ENCODE measurements at regions of chr2 and their contacts with region 1.

Region 1: DNA sequence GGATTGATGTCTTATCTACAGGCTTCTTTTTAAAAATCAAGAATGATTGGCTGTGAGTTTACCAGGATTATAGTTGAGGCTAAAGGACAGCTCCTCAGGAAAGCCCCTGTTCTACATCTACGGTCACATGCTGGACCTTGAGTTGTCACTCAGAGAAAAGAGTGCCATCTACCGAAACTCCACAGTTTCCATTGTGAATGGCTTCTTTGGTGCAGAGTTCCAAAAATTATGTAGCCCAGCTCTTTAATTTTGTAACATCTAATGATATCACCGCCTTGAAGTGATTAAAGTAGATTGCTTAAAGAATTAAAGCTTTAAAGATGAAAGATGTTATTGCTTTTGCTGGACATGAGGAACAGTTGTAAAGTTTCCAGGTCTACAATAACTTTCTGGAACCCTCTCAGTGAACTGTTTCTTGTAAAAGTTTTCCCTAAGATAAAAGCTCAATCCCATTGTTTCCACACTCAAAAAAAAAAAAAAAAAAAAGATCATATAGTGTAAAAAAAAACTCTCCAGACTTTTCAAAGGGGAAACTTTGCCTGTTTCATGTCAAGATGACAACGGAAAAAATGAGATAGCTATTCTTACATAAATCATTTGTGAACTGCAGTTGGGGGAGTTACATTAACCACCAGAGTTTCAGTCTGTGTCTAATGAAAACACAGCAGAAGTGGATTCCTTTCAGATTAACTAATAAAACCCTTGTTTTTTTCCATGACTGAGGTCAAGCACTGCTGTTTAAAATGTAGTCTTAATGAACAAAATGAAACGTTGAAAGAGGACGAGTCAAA is 4.3 kb downstream of the COL3A1 start:
- DNase-seq: peak; percentile 86
- H3K4me3 ChIP-seq: peak overlapping the region in 1 of 3 experiments; percentile 13
- H3K27ac ChIP-seq: peak overlapping the region; percentile 12
- H3K4me1 ChIP-seq: peaks cover 23% of the 10 kb centered on the region
- H3K27me3 ChIP-seq: no peaks in the 10 kb centered on the region
- CTCF ChIP-seq: peak; percentile 16 to 25
- POLR2A ChIP-seq: no peak

Region 2: GRCh38 chr2:188524519-188525113 is 453.9 kb before region 1 on chr2:
- CTCF ChIA-PET with region 1: interaction called, 250 read pairs
- POLR2A ChIA-PET with region 1: no interaction called
- dilution Hi-C with region 1: no loop called
- intact Hi-C with region 1: loop called (anchors 1 kb)
- DNase-seq: peak; percentile 65
- H3K4me3 ChIP-seq: no peak overlapping the region
- H3K27ac ChIP-seq: no peak overlapping the region
- H3K4me1 ChIP-seq: peaks cover 22% of the 10 kb centered on the region
- H3K27me3 ChIP-seq: no peaks in the 10 kb centered on the region
- CTCF ChIP-seq: peak; percentile 49 to 59
- POLR2A ChIP-seq: no peak

Region 3: GRCh38 chr2:188534875-188535274 is 443.6 kb before region 1 on chr2:
- CTCF ChIA-PET with region 1: interaction called, 3 read pairs
- POLR2A ChIA-PET with region 1: no interaction called
- dilution Hi-C with region 1: no loop called
- intact Hi-C with region 1: loop called (anchors 5 kb)
- DNase-seq: no peak
- H3K4me3 ChIP-seq: no peak overlapping the region
- H3K27ac ChIP-seq: no peak overlapping the region
- H3K4me1 ChIP-seq: no peaks in the 10 kb centered on the region
- H3K27me3 ChIP-seq: no peaks in the 10 kb centered on the region
- CTCF ChIP-seq: no peak
- POLR2A ChIP-seq: no peak

Region 4: DNA sequence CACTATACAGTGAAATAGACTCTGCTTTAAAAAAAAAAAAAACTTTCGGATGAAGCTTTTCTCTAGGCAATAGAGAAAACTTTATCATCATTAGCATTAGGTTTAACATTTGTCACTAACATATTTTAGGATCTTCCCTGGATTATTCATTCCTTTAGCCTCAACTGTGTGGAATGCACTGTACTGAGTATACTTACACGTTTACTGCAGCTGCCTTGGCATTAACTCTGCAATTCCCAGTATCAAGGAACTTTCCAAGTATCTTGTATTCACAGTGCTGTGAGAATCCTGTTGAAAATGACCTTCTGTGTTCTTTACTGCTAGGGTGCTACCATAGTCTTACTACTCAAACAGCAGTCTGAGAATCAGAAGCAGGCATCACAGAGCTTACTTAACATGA is 332.5 kb before region 1 on chr2:
- CTCF ChIA-PET with region 1: no interaction called
- POLR2A ChIA-PET with region 1: no interaction called
- dilution Hi-C with region 1: no loop called
- intact Hi-C with region 1: loop called (anchors 5 kb)
- DNase-seq: no peak
- H3K4me3 ChIP-seq: no peak overlapping the region
- H3K27ac ChIP-seq: no peak overlapping the region
- H3K4me1 ChIP-seq: no peaks in the 10 kb centered on the region
- H3K27me3 ChIP-seq: no peaks in the 10 kb centered on the region
- CTCF ChIP-seq: no peak
- POLR2A ChIP-seq: no peak

Region 5: DNA sequence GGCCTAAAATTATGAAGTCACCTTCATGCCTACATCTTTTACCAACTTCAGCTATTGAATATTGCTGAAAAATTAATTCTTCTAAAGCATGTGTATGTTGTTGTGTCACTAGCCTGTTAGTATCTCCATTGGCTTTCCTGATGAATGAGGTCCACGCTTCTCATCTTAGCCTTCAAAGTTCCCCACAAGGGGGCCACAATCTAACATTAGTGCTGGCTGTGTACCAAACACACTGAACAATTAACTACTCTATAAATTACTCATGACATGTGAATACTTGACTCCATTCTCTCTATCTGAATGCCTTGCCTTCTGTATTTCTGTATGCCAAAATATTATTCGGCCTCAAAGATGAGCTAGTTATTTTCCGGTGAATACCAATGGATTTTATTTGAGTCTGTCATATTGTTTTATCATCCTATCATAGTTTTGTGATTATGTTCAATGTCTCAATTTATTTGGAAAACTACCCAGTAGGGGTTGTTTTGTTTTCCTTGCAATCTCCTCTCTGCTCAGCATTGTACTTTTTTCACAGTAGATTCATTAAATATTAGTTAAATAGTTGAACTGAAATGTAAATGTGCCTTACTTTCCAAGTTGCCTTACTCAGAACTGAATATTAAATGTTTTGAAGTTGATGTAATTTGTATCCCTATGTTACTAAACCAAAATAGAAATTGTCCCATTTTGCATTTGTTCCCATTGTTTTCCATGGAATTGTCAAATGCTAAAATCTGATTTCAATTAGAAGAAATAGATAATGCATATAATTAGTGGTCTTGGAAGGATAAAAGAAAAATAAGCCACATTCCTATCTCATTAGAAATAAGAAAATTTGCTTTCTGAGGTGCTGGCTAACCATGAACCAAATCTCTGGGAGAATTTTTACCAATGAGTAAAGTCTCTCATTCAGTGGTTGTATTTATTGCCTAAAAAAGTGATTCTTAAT is 212.7 kb before region 1 on chr2:
- CTCF ChIA-PET with region 1: interaction called, 28 read pairs
- POLR2A ChIA-PET with region 1: no interaction called
- dilution Hi-C with region 1: no loop called
- intact Hi-C with region 1: loop called (anchors 1 kb)
- DNase-seq: peak; percentile 86
- H3K4me3 ChIP-seq: no peak overlapping the region
- H3K27ac ChIP-seq: no peak overlapping the region
- H3K4me1 ChIP-seq: no peaks in the 10 kb centered on the region
- H3K27me3 ChIP-seq: no peaks in the 10 kb centered on the region
- CTCF ChIP-seq: peak; percentile 50 to 58
- POLR2A ChIP-seq: no peak

Region 6: GRCh38 chr2:188788621-188789020 is 189.9 kb before region 1 on chr2:
- CTCF ChIA-PET with region 1: interaction called, 19 read pairs
- POLR2A ChIA-PET with region 1: no interaction called
- dilution Hi-C with region 1: no loop called
- intact Hi-C with region 1: no loop called
- DNase-seq: peak; percentile 91
- H3K4me3 ChIP-seq: peak overlapping the region in 1 of 3 experiments; percentile 11
- H3K27ac ChIP-seq: peak overlapping the region; percentile 68
- H3K4me1 ChIP-seq: peaks cover 26% of the 10 kb centered on the region
- H3K27me3 ChIP-seq: no peaks in the 10 kb centered on the region
- CTCF ChIP-seq: no peak
- POLR2A ChIP-seq: no peak

Region 7: DNA sequence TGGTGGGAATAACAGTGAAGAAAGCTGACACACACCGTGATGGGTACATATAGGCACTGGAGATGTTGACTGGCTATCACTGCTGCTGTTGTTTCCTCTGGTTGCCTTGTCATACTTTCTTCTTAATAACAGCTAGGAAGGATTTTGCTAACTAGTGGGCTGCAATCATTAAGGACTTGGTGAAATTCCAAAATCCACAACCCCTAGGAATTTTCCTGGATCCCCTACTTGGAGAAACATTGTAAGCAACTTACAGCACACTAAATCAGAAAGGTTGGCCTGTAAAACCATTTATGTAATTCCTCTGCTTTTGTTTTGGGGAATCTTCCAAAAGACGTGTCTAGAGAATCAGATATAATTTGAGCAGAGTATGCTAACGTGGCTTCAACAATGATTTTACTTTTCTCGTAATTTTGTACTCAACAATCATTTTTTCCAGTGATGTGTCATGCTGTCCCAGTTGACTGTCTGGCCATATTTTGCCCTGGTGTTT is 12.4 kb before region 1 on chr2:
- CTCF ChIA-PET with region 1: interaction called, 22 read pairs
- POLR2A ChIA-PET with region 1: no interaction called
- dilution Hi-C with region 1: no loop called
- intact Hi-C with region 1: no loop called
- DNase-seq: no peak
- H3K4me3 ChIP-seq: no peak overlapping the region
- H3K27ac ChIP-seq: no peak overlapping the region
- H3K4me1 ChIP-seq: no peaks in the 10 kb centered on the region
- H3K27me3 ChIP-seq: no peaks in the 10 kb centered on the region
- CTCF ChIP-seq: no peak
- POLR2A ChIP-seq: no peak

Region 8: DNA sequence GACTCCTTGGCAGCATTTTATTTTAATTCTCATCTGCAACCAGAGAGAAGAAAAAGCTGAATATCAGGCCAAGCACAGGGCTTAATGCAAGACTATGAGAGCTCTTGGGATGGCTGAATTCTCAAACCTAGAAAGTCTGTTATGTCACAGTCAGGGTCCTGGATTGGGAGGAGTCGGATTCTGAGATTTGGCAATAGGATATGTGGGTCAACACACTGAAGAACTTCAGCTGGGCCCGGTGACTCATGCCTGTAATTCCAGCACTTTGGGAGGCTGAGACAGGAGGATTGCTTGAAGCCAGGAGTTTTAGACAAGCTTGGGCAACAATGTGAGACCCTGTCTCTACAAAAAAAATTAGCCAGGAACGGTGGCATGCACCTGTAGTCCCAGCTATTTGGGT is 98.1 kb after region 1 on chr2:
- CTCF ChIA-PET with region 1: no interaction called
- POLR2A ChIA-PET with region 1: no interaction called
- dilution Hi-C with region 1: no loop called
- intact Hi-C with region 1: no loop called
- DNase-seq: no peak
- H3K4me3 ChIP-seq: no peak overlapping the region
- H3K27ac ChIP-seq: no peak overlapping the region
- H3K4me1 ChIP-seq: no peaks in the 10 kb centered on the region
- H3K27me3 ChIP-seq: no peaks in the 10 kb centered on the region
- CTCF ChIP-seq: no peak
- POLR2A ChIP-seq: no peak